MCF 10A (cell line): ENCODE measurements at regions of chr22 and their contacts with region 1.

Region 1: GRCh38 chr22:24189249-24190158 is 8.2 kb downstream of the SUSD2 start:
- DNase-seq: peak; percentile 88
- H3K4me3 Mint-ChIP-seq: peak overlapping the region; percentile 56
- H3K27ac Mint-ChIP-seq: peak overlapping the region; percentile 82
- H3K4me1 Mint-ChIP-seq: peaks cover 32% of the 10 kb centered on the region
- H3K27me3 Mint-ChIP-seq: no peaks in the 10 kb centered on the region
- CTCF ChIP-seq: peak; percentile 93

Region 2: GRCh38 chr22:23984430-23984829 is 205.1 kb before region 1 on chr22:
- CTCF ChIA-PET with region 1: no interaction called
- POLR2A ChIA-PET with region 1: no interaction called
- intact Hi-C with region 1: loop called (anchors 5 kb)
- DNase-seq: peak; percentile 65
- H3K4me3 Mint-ChIP-seq: no peak overlapping the region
- H3K27ac Mint-ChIP-seq: no peak overlapping the region
- H3K4me1 Mint-ChIP-seq: no peaks in the 10 kb centered on the region
- H3K27me3 Mint-ChIP-seq: no peaks in the 10 kb centered on the region
- CTCF ChIP-seq: peak; percentile 81

Region 3: GRCh38 chr22:24208012-24208749 is 18.7 kb after region 1 on chr22:
- CTCF ChIA-PET with region 1: interaction called, 13 read pairs
- POLR2A ChIA-PET with region 1: interaction called, 6 read pairs
- intact Hi-C with region 1: no loop called
- DNase-seq: peak; percentile 98
- H3K4me3 Mint-ChIP-seq: peak overlapping the region; percentile 67
- H3K27ac Mint-ChIP-seq: peak overlapping the region; percentile 99
- H3K4me1 Mint-ChIP-seq: peaks cover 26% of the 10 kb centered on the region
- H3K27me3 Mint-ChIP-seq: no peaks in the 10 kb centered on the region
- CTCF ChIP-seq: no peak

Region 4: DNA sequence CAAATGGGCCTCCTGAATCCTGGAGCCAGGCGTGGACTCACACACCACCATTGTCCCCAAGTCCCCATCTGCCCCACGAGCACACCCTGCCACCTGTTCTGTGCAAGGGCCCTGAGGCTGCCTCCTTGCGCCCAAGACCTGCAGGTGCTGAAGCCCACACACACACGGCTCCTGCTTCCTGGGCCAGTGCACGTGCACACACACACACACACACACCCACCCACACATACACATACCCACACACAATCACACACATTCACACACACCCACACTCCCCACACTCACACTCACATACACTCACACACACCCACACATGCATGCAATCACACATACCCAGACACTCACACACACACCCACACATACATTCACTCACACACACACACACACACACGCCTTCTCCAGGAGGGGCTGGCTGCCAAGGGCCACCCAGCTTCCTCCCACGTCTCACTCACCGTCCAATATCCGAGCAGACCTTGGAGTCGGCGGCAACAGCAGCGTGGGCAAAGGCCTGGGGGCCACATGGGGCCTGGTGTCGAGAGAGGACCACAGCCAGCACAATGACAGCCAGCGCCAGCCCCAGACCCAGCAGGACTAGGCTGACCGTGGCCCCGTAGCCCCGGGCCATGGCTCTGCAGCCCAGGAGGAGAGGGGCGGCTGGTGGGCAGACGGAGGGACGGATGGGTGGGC is 54.7 kb after region 1 on chr22:
- CTCF ChIA-PET with region 1: interaction called, 18 read pairs
- POLR2A ChIA-PET with region 1: interaction called, 13 read pairs
- intact Hi-C with region 1: loop called (anchors 1 kb)
- DNase-seq: peak; percentile 63
- H3K4me3 Mint-ChIP-seq: peak overlapping the region; percentile 64
- H3K27ac Mint-ChIP-seq: peak overlapping the region; percentile 31
- H3K4me1 Mint-ChIP-seq: peaks cover 33% of the 10 kb centered on the region
- H3K27me3 Mint-ChIP-seq: no peaks in the 10 kb centered on the region
- CTCF ChIP-seq: no peak

Region 5: GRCh38 chr22:25057013-25057881 is 867.7 kb after region 1 on chr22:
- CTCF ChIA-PET with region 1: no interaction called
- POLR2A ChIA-PET with region 1: no interaction called
- intact Hi-C with region 1: no loop called
- DNase-seq: peak; percentile 65
- H3K4me3 Mint-ChIP-seq: no peak overlapping the region
- H3K27ac Mint-ChIP-seq: no peak overlapping the region
- H3K4me1 Mint-ChIP-seq: peaks cover 8% of the 10 kb centered on the region
- H3K27me3 Mint-ChIP-seq: no peaks in the 10 kb centered on the region
- CTCF ChIP-seq: peak; percentile 82